PC-3 (cell line): ENCODE measurements at regions of chr12 and their contacts with region 1.

Region 1: GRCh38 chr12:47032644-47033043 is 46.8 kb upstream of the PCED1B start:
- DNase-seq: peak; percentile 78
- ATAC-seq: peak; percentile 58
- H3K4me3 ChIP-seq: no peak overlapping the region
- H3K27ac ChIP-seq: no peak overlapping the region
- H3K4me1 ChIP-seq: peaks cover 44% of the 10 kb centered on the region
- H3K27me3 ChIP-seq: no peaks in the 10 kb centered on the region
- CTCF ChIP-seq: peak; percentile 81

Region 2: DNA sequence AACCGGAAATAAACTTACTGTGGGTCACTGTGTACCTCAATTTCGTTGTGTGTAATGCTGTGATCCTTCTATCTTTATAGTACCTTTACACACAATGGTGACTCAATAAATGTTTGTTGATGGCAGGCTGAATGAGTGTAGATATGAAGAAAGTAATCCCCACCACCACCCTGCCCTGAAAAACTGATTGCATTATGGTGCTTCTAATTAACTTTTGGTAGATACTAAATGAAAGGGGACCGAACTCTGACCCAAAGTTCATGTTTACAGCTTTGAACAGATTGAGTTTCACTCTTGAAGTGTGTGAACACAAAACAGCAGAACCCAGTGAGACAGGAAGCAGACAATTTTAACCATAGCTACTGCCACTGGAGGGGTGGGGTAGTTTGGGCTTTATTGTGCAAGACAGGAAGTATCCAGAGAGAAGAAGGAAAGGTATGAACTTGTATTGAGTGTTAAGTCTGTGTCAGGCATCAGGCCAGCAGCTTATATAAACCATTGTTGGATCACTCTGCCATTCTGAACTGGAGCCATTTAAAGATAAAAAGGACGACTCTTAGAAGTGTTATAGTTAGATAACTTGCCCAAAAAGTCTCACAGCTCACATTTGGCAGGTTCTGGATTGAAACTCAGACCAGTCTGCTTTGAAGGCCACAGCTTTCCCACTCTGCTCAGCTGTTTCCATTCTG is 244.1 kb after region 1 on chr12:
- CTCF ChIA-PET with region 1: no interaction called
- POLR2A ChIA-PET with region 1: no interaction called
- intact Hi-C with region 1: loop called (anchors 10 kb)
- DNase-seq: peak; percentile 90
- ATAC-seq: peak; percentile 57
- H3K4me3 ChIP-seq: no peak overlapping the region
- H3K27ac ChIP-seq: peak overlapping the region; percentile 79
- H3K4me1 ChIP-seq: peaks cover 69% of the 10 kb centered on the region
- H3K27me3 ChIP-seq: no peaks in the 10 kb centered on the region
- CTCF ChIP-seq: no peak

Region 3: DNA sequence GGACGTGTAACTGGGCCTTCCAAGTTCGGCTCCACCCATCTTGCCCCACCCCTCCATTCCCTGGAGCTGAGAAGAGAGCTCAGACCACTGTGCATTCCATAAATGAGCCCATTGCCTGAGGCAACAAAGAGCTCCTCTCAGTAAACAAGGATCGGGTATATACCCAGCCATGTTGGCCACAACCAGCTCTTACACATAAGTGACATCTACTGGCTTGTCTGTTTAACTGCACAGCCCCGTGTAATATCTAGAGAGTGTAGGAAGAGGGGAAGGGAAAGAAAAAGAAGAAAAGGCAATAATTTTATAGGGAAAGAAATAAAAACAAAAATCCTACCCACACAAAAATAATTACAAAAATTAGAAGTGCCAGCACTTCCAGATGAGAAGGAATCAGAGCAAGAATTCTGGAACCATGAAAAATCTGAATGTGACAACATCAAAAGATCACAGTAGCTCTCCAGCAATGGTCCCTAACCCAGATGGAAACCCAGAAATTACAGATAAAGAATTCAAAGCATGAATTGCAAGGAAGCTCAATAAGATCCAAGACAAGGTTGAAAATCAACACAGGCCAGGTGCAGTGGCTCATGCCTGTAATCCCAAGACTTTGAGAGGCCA is 365.1 kb after region 1 on chr12:
- CTCF ChIA-PET with region 1: interaction called, 19 read pairs
- POLR2A ChIA-PET with region 1: no interaction called
- intact Hi-C with region 1: loop called (anchors 1 kb)
- DNase-seq: peak; percentile 94
- ATAC-seq: peak; percentile 88
- H3K4me3 ChIP-seq: no peak overlapping the region
- H3K27ac ChIP-seq: no peak overlapping the region
- H3K4me1 ChIP-seq: peaks cover 25% of the 10 kb centered on the region
- H3K27me3 ChIP-seq: no peaks in the 10 kb centered on the region
- CTCF ChIP-seq: peak; percentile 93

Region 4: DNA sequence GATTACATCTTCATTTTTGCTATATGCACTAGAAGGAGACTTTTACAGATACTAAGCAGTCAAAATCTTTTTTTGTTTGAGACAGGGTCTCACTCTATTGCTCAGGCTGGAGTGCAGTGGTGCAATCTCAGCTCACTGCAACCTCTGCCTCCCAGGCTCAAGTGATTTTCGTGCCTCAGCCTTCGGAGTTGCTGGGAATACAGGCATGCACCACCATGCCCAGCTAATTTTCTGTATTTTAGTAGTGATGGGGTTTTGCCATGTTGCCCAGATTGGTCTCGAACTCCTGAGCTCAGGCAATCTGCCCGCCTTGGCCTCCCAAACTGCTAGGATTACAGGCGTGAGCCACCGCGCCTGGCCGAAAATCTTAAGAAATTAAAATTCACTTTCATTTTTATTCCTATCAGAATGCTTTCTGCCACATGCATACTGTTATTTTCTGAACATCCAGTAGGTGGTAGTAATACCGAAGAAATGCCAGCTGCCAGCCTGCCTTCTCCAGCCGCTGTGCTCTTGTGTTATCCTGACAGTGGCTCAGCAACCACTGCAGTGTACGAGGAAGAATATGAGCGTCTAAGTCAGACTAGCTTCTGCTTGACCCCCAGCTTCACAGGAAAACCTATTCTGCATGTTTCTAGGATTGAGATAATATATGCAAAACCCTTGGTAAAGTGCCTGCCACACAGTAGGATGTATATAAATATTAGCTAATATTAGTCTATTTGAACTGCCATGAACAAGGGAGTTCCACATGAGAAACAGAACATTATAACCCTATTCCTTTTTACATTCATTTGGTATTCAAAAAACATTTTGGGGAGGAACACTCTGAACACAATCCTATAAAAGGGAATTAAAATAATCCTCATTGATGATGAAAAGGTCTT is 619.0 kb after region 1 on chr12:
- CTCF ChIA-PET with region 1: no interaction called
- POLR2A ChIA-PET with region 1: no interaction called
- intact Hi-C with region 1: loop called (anchors 10 kb)
- DNase-seq: peak; percentile 82
- ATAC-seq: peak; percentile 79
- H3K4me3 ChIP-seq: peak overlapping the region; percentile 61
- H3K27ac ChIP-seq: no peak overlapping the region
- H3K4me1 ChIP-seq: peaks cover 15% of the 10 kb centered on the region
- H3K27me3 ChIP-seq: no peaks in the 10 kb centered on the region
- CTCF ChIP-seq: peak; percentile 71